Ovary (tissue), 10 donors: ENCODE measurements at regions of chr5 and their contacts with region 1.

Region 1: DNA sequence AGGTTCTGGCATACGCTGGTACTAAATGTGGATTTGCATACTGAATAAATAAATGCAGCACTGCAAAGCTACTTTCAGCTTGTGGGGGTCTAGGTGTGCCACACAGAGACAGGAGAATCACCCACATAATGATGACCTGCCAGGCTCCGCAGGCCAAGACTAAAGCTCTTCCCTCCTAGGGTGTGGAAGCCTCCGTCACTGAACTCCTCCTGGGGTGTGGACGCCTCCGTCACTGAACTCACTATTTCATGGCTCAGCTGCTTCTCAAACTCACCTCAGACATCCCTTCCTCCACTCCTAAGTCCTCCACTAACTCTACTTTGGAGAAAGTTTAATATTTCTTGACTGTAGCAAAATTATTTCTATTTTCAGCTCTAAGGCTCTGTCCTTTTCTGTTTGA is 65.3 kb upstream of the GOLPH3 start:
- DNase-seq: no peak
- H3K4me3 ChIP-seq: no peak overlapping the region
- H3K27ac ChIP-seq: no peak overlapping the region
- H3K4me1 ChIP-seq: peaks cover 7% of the 10 kb centered on the region
- H3K27me3 ChIP-seq: no peaks in the 10 kb centered on the region
- CTCF ChIP-seq: no peak
- EP300 ChIP-seq: no peak
- POLR2A ChIP-seq: no peak

Region 2: DNA sequence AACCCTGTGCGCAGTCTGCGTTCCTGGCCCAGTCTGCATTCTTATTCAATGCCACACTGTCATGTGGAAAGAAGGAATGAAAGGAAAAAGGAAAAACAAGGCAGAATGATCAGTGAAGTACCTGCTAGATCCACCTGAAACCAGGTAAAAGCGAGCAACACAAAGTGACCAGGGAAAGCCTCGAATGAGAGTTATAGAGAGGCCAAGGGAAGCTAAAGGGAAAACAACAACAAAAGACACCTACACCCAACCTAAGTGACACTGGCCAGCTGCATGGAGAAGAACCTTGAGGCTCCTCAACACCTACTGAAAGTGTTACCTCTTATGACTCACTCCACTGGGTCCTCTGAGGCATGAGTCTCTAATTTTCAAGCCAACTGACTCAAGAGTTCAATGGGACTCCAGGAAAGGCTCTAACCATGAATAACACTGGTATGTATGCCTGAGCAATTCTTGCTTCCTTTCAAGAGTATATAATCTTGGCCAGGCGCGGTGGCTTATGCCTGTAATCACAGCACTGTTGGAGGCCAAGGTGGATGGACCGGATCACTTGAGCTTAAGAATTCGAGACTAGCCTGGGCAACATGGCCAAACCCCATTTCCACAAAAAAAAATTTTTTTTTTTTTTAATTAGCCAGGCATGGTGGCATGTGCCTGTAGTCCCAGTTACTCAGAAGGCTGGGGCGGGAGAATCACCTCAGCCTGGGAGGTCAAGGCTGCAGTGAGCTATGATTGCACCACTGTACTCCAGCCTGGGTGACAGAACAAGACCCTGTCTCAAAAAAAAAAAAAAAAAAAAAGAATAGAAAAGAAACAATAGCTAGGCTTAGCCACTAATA is 44.4 kb after region 1 on chr5:
- intact Hi-C with region 1: no loop called
- DNase-seq: no peak
- H3K4me3 ChIP-seq: no peak overlapping the region
- H3K27ac ChIP-seq: no peak overlapping the region
- H3K4me1 ChIP-seq: peaks cover 6% of the 10 kb centered on the region
- H3K27me3 ChIP-seq: no peaks in the 10 kb centered on the region
- CTCF ChIP-seq: no peak
- EP300 ChIP-seq: no peak
- POLR2A ChIP-seq: no peak

Region 3: GRCh38 chr5:32388432-32389129 is 149.2 kb after region 1 on chr5:
- intact Hi-C with region 1: loop called in 1 of 4 experiments (anchors 5 kb)
- DNase-seq: no peak
- H3K4me3 ChIP-seq: no peak overlapping the region
- H3K27ac ChIP-seq: peak overlapping the region in 1 of 2 donors; percentile 59
- H3K4me1 ChIP-seq: no peaks in the 10 kb centered on the region
- H3K27me3 ChIP-seq: no peaks in the 10 kb centered on the region
- CTCF ChIP-seq: no peak
- EP300 ChIP-seq: no peak
- POLR2A ChIP-seq: no peak